CD8-positive, alpha-beta T cell (primary cell): ENCODE measurements at regions of chr12 and their contacts with region 1.

Region 1: GRCh38 chr12:24537083-24537860 is 411.6 kb downstream of the BCAT1 start:
- DNase-seq: no peak
- ATAC-seq: no peak
- H3K4me3 ChIP-seq: no peak overlapping the region
- H3K4me3 Mint-ChIP-seq: no peak overlapping the region
- H3K27ac ChIP-seq: no peak overlapping the region
- H3K27ac Mint-ChIP-seq: no peak overlapping the region
- H3K4me1 ChIP-seq: no peaks in the 10 kb centered on the region
- H3K4me1 Mint-ChIP-seq: no peaks in the 10 kb centered on the region
- H3K27me3 ChIP-seq: no peaks in the 10 kb centered on the region
- H3K27me3 Mint-ChIP-seq: no peaks in the 10 kb centered on the region
- CTCF ChIP-seq: no peak

Region 2: DNA sequence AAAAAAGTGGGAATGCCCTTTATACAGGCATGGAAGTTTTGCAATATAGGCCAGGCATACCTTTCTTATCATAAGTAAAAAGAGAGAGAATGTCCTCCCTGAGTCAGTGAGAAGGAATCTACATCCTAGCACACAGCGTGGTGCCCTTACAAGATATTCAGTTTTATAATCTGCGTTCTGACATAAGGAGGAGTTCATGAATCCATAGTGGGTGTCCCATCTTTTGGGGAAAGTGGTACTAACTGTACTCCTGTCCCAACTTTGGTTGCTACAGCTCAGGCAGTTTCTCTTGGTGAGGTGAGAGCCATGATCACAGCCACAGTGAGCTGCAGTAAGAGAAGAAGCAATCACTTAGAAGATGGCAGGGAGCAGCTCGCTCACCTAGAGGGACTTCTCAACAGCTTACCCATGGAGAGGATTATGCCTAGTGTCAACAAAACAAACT is 78.7 kb after region 1 on chr12:
- CTCF ChIA-PET with region 1: no interaction called
- POLR2A ChIA-PET with region 1: no interaction called
- intact Hi-C with region 1: loop called in 1 of 2 experiments (anchors 2 kb)
- DNase-seq: no peak
- ATAC-seq: no peak
- H3K4me3 ChIP-seq: no peak overlapping the region
- H3K4me3 Mint-ChIP-seq: no peak overlapping the region
- H3K27ac ChIP-seq: no peak overlapping the region
- H3K27ac Mint-ChIP-seq: no peak overlapping the region
- H3K4me1 ChIP-seq: no peaks in the 10 kb centered on the region
- H3K4me1 Mint-ChIP-seq: no peaks in the 10 kb centered on the region
- H3K27me3 ChIP-seq: no peaks in the 10 kb centered on the region
- H3K27me3 Mint-ChIP-seq: no peaks in the 10 kb centered on the region
- CTCF ChIP-seq: no peak